GM10248 (cell line): ENCODE measurements at regions of chr2 and their contacts with region 1.

Region 1: GRCh38 chr2:8831516-8831915 is 5.9 kb downstream of the KIDINS220 start:
- DNase-seq: no peak
- CTCF ChIP-seq: no peak

Region 2: GRCh38 chr2:8819194-8819593 is 12.3 kb before region 1 on chr2:
- CTCF ChIA-PET with region 1: interaction called, 15 read pairs
- POLR2A ChIA-PET with region 1: interaction called, 3 read pairs
- DNase-seq: no peak
- CTCF ChIP-seq: no peak

Region 3: DNA sequence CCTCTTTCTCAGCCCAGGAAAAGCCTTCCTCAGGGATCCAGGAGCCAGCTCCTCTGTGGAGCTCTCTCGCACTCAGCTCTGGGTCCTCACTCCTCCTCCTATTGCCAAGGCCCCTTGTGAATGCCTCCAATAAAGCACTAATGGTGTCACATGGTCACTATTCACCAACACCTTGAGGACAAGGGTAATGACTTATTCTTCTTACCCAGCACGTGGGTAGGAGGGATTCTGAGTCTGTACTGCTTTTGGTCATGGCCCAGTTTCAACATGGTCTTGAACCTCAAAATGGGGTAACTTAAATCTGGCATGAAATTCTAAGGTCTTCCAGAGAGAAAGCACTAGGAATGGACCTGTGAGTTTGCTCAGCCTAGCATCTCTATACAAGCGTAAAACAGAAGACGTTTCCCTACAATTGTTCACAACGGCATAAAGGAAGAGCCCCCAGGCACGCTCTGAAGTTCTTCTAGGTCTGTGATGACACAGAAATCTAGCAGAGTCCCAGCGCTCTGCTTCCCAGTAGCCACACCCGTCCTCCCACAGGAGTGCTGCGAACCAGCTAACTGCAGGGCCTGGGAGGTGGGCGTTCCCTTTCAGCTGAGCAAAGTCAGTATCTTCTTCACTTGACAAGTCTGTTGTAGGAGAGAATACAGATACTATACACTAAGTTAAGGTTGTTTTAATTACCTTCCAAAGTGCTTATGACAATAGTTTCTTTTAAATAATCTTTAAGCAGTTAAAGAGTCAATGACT is 20.5 kb after region 1 on chr2:
- CTCF ChIA-PET with region 1: no interaction called
- POLR2A ChIA-PET with region 1: no interaction called
- DNase-seq: no peak
- CTCF ChIP-seq: no peak

Region 4: DNA sequence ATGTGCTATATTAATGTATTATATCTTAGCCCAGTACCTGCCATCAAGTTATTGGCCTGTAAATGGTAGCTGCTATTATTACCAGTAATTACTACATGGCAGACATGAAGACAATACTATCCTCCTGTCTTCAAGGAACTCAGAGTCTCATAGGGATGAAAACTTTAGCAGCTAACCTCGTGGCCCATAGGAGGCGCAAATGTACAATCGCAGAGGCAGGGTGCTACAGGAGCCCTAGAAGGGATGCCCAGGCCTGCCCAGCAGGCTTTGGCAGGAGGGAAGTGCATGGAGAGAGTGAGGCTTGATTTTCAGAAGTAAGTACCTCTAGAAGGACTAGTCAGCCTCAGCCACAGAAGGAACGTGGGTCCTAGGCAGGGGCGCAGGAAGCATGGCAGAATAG is 50.6 kb after region 1 on chr2:
- CTCF ChIA-PET with region 1: no interaction called
- POLR2A ChIA-PET with region 1: no interaction called
- DNase-seq: no peak
- CTCF ChIP-seq: no peak